Activated T-helper 2 cell treated with anti-CD3 and anti-CD28 coated beads, Interferon-gamma antibody, Interleukin-2, Interleukin-4, amounts not matched to agents 10 μg/mL and 5 μg/mL and 100 μg/mL, durations not matched to agents 14 hours and 24 hours and 36 hours (primary cell): ENCODE measurements at regions of chr1 and their contacts with region 1.

Region 1: DNA sequence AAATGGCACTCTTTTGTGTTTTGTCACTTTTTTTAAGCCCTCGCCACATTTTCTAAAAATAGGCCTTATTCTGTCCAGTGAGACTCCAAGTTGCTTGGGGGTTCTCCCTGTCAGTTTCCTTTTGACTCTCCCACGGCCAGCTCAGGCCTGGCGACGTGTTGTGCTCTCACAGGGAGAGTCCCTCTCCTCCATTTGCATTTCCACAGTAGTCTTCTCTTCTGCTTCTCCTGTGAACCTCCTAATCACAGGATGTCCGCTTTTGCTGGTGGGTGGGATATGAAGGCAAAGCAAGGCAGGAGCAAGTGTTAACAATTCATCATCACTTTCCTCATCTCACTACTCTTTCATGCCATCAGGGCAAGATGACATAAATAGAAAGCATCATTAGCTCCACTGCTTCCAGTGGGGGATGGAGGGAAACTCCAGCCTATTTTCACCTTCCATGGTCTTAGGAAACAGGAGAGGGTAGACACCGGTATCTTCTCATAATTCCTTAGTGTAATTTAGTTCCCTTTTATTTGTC is 99.8 kb downstream of the INTS7 start:
- DNase-seq: no peak
- H3K4me3 Mint-ChIP-seq: peak overlapping the region; percentile 3
- H3K27ac Mint-ChIP-seq: peak overlapping the region; percentile 6
- H3K4me1 Mint-ChIP-seq: peaks cover 43% of the 10 kb centered on the region
- H3K27me3 Mint-ChIP-seq: peaks cover 2% of the 10 kb centered on the region

Region 2: GRCh38 chr1:211830330-211831142 is 105.0 kb before region 1 on chr1 and contains the start of gene LPGAT1:
- intact Hi-C with region 1: loop called (anchors 1 kb)
- DNase-seq: peak; percentile 67
- H3K4me3 Mint-ChIP-seq: peak within 1 kb of the TSS; percentile 92
- H3K27ac Mint-ChIP-seq: peak within 1 kb of the TSS; percentile 78
- H3K4me1 Mint-ChIP-seq: peaks cover 55% of the 10 kb centered on the region
- H3K27me3 Mint-ChIP-seq: peaks cover 6% of the 10 kb centered on the region
- total RNA-seq, gene LPGAT1: 27.8 and 31.1 TPM in 2 replicates